ENCODE measurements at regions of chr3 and their contacts with region 1.

Region 1: GRCh38 chr3:167406875-167407492 is 26.9 kb upstream of the ZBBX start:
- DNase-seq: peak; percentile 32 to 94 (median 62)

Region 2: DNA sequence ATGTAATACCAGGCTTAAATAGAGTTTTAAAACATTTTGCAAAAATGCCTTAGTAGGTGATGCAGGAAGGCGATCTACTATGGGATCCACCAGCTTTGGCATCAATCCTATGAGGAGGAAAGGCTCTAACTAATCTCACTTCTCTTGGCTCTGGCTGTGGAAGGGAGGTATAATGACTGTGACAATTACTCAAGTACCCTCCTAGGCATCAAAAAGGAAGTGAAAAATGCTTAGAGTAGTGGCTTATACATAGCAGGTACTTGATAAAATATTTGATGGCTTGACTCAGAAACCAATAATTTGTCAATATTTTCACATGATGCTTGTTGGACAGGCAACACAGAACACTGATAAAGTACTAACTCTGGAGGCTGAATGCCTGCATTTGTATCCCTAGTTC is 101.0 kb after region 1 on chr3:
- intact Hi-C with region 1: no loop called
- DNase-seq: no peak

Region 3: DNA sequence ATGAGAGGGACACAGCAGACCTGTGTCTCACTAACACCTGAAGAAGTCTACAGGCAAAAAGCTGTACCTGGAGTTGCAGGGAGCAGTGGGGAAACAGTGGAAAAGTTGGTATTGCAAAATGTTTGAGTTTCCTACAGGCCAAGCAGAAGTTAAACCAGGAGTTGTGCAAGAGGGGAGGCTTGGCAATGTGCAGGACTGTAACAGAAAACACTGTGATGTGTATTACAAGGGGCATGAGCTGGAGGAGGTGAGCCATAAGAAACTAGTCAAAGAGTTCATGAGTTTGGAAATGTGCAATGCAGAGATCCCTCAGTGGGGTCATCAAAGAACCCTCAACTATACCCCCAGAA is 114.0 kb after region 1 on chr3:
- intact Hi-C with region 1: no loop called
- DNase-seq: no peak

Region 4: GRCh38 chr3:167684388-167684993 is 277.5 kb after region 1 on chr3:
- intact Hi-C with region 1: loop called (anchors 1 kb)
- DNase-seq: peak in 1 of 10 donors; percentile 41

Region 5: GRCh38 chr3:167740961-167741587 is 334.1 kb after region 1 on chr3:
- intact Hi-C with region 1: loop called (anchors 5 kb)
- DNase-seq: peak in 8 of 10 donors; percentile 18 to 93 (median 49)

Region 6: DNA sequence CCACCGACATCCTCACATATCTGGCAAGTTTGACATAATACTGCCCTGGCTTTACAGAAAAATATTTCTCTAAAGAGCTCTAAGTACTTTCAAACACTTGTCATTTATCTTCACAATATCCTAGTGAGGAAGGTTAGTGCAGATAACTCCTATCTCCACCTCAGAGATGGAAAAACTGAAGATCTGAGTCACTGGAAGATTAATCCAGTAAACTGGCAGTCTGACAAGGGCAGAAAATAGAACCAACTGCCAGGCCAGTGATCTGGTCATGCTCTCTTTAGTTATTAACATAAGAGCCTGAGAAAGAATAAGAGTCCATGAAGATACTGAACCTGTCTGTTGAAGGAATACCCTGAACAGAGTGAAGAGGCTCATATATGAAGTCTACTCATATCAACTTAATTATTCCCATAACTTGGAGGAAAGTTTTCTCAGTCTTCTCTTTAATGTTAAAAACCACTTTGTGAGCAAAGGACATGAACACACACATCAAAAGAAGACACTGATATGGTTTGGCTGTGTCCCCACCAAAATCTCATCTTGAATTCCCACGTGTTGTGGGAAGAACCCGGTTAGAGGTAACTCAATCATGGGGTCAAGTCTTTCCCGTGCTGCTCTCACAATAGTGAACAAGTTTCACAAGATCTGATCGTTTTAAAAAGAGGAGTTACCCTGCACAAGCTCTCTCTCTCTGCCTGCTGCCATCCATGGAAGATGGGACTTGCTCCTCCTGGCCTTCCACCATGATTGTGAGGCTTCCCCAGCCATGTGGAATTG is 627.4 kb after region 1 on chr3:
- intact Hi-C with region 1: loop called (anchors 10 kb)
- DNase-seq: no peak

Measured in posterior cingulate gyrus (tissue), 11 donors.